Endothelial cell of umbilical vein (primary cell): ENCODE measurements at regions of chrX and their contacts with region 1.

Region 1: GRCh38 chrX:8815464-8816065 is 14.4 kb upstream of the FAM9A start:
- DNase-seq: peak; percentile 36
- H3K4me3 ChIP-seq: no peak overlapping the region
- H3K27ac ChIP-seq: no peak overlapping the region
- H3K4me1 ChIP-seq: no peaks in the 10 kb centered on the region
- H3K27me3 ChIP-seq: no peaks in the 10 kb centered on the region
- CTCF ChIP-seq: peak; percentile 40 to 58
- POLR2A ChIP-seq: no peak

Region 2: GRCh38 chrX:7996414-7996813 is 819.2 kb before region 1 on chrX:
- CTCF ChIA-PET with region 1: no interaction called
- POLR2A ChIA-PET with region 1: no interaction called
- dilution Hi-C with region 1: no loop called
- intact Hi-C with region 1: loop called (anchors 2 kb)
- DNase-seq: peak; percentile 18
- H3K4me3 ChIP-seq: no peak overlapping the region
- H3K27ac ChIP-seq: no peak overlapping the region
- H3K4me1 ChIP-seq: no peaks in the 10 kb centered on the region
- H3K27me3 ChIP-seq: no peaks in the 10 kb centered on the region
- CTCF ChIP-seq: peak; percentile 13 to 21
- POLR2A ChIP-seq: no peak

Region 3: DNA sequence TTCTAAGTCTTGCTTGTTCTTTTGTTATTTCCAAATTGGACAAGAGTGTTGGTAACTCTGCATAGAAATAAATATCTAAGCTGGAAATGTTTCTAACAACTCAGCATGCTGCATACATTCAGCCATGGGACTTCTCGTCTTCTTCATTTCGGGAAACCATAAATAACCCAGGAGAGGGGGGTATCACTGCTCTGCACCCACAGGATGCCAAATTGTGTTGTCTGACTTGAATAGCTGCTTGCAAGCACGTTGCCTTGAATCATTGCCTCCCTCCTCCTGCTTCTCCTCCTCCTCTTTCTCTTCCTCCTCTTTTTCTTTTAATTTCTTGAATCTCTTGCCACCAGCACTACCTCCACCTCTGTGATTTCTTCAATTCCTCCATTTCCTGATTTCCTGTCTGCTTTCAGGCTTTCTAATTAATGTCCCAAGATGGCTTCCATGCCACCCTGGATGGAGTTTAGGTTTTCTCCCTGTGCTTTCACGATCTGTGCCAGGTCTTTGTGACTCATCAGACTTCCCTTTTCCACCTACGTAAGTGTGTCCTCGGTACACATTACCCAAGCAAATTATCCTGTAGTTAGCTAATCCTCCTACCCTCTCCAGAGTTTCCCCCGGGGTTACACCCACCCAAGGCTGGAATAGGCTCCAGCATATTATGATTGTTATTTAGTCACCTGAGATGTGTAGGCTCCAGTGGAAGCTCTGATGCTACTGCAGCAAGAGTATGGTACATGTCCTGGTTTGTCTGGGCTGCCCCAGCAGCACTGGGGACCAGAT is 473.6 kb before region 1 on chrX:
- CTCF ChIA-PET with region 1: no interaction called
- POLR2A ChIA-PET with region 1: no interaction called
- dilution Hi-C with region 1: no loop called
- intact Hi-C with region 1: no loop called
- DNase-seq: no peak
- H3K4me3 ChIP-seq: no peak overlapping the region
- H3K27ac ChIP-seq: no peak overlapping the region
- H3K4me1 ChIP-seq: no peaks in the 10 kb centered on the region
- H3K27me3 ChIP-seq: no peaks in the 10 kb centered on the region
- CTCF ChIP-seq: no peak
- POLR2A ChIP-seq: no peak

Region 4: GRCh38 chrX:8704184-8704583 is 111.4 kb before region 1 on chrX:
- CTCF ChIA-PET with region 1: no interaction called
- POLR2A ChIA-PET with region 1: no interaction called
- dilution Hi-C with region 1: no loop called
- intact Hi-C with region 1: no loop called
- DNase-seq: no peak
- H3K4me3 ChIP-seq: no peak overlapping the region
- H3K27ac ChIP-seq: no peak overlapping the region
- H3K4me1 ChIP-seq: no peaks in the 10 kb centered on the region
- H3K27me3 ChIP-seq: no peaks in the 10 kb centered on the region
- CTCF ChIP-seq: no peak
- POLR2A ChIP-seq: no peak